Heart left ventricle (tissue), 16 donors: ENCODE measurements at regions of chr22 and their contacts with region 1.

Region 1: GRCh38 chr22:36781656-36782627 is 6.0 kb upstream of the IFT27 start:
- DNase-seq: peak; percentile 71 to 89 (median 73)
- ATAC-seq: peak; percentile 49 to 92 (median 89)
- H3K4me3 ChIP-seq: no peak overlapping the region
- H3K27ac ChIP-seq: peak overlapping the region in 1 of 12 donors; percentile 47
- H3K4me1 ChIP-seq: peaks cover 0 to 10% (median 2%) of the 10 kb centered on the region in 12 donors
- H3K27me3 ChIP-seq: peaks cover 0 to 32% (median 14%) of the 10 kb centered on the region in 9 donors
- CTCF ChIP-seq: peak; percentile 87 to 97 (median 91)
- POLR2A ChIP-seq: no peak

Region 2: GRCh38 chr22:36671404-36671803 is 110.5 kb before region 1 on chr22:
- intact Hi-C with region 1: no loop called
- DNase-seq: no peak
- ATAC-seq: no peak
- H3K4me3 ChIP-seq: no peak overlapping the region
- H3K27ac ChIP-seq: no peak overlapping the region
- H3K4me1 ChIP-seq: no peaks in the 10 kb centered on the region
- H3K27me3 ChIP-seq: peaks cover 0 to 29% (median 7%) of the 10 kb centered on the region in 9 donors
- CTCF ChIP-seq: no peak
- POLR2A ChIP-seq: no peak

Region 3: DNA sequence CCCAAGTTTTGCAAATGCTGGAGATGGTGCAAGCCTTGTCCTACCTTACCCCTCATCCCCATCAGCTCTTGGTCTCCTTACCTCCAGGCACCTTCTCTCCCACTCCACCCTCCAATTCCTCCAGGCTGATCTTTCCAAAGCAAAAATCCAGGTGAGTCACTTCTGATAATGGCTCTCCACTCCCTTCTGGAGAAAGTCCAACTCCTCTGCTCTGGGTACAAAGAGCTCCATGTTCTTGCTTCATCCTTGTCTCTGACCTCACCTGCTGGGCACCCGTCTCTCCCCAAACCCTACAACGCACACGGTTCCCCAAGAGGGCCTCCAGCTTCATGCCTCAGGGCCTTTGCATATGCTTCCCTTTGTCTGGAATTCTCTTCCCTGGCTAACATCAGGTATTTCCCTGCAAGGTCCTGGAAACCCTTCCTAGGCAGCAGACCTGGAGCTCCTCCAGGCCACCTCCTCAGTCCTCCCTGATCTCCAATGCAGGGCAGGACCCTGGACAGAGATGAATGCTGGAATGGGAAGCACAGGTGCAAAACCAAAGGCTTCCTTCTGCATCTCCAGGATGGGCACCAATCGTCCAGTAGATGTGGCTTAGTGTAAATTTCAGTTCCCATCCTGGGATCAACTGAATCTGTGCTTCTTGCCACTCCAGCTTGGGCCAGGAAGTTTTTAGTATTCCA is 28.7 kb before region 1 on chr22:
- intact Hi-C with region 1: no loop called
- DNase-seq: peak in 1 of 5 donors; percentile 2
- ATAC-seq: no peak
- H3K4me3 ChIP-seq: no peak overlapping the region
- H3K27ac ChIP-seq: no peak overlapping the region
- H3K4me1 ChIP-seq: no peaks in the 10 kb centered on the region
- H3K27me3 ChIP-seq: peaks cover 0 to 43% (median 4%) of the 10 kb centered on the region in 9 donors
- CTCF ChIP-seq: no peak
- POLR2A ChIP-seq: no peak

Region 4: GRCh38 chr22:36856121-36856791 is 74.3 kb after region 1 on chr22:
- intact Hi-C with region 1: loop called (anchors 1 to 5 kb)
- DNase-seq: peak; percentile 89 to 95 (median 91)
- ATAC-seq: peak; percentile 77 to 93 (median 90)
- H3K4me3 ChIP-seq: no peak overlapping the region
- H3K27ac ChIP-seq: no peak overlapping the region
- H3K4me1 ChIP-seq: peaks cover 0 to 42% (median 8%) of the 10 kb centered on the region in 12 donors
- H3K27me3 ChIP-seq: peaks cover 0 to 11% (median 0%) of the 10 kb centered on the region in 9 donors
- CTCF ChIP-seq: peak; percentile 99 to 100 (median 100)
- POLR2A ChIP-seq: no peak

Region 5: GRCh38 chr22:36977947-36978660 is 196.2 kb after region 1 on chr22:
- intact Hi-C with region 1: loop called (anchors 2 to 5 kb)
- DNase-seq: peak; percentile 90 to 94 (median 91)
- ATAC-seq: peak; percentile 95 to 98 (median 98)
- H3K4me3 ChIP-seq: peak overlapping the region in 11 of 12 donors; percentile 22 to 57 (median 48)
- H3K27ac ChIP-seq: peak overlapping the region in 3 of 12 donors; percentile 22 to 28 (median 25)
- H3K4me1 ChIP-seq: peaks cover 0 to 9% (median 3%) of the 10 kb centered on the region in 12 donors
- H3K27me3 ChIP-seq: peaks cover 0 to 12% (median 4%) of the 10 kb centered on the region in 9 donors
- CTCF ChIP-seq: peak; percentile 91 to 96 (median 95)
- POLR2A ChIP-seq: no peak

Region 6: GRCh38 chr22:37043828-37044538 is 262.0 kb after region 1 on chr22:
- intact Hi-C with region 1: loop called in 6 of 10 experiments (anchors 5 to 10 kb)
- DNase-seq: peak; percentile 54 to 78 (median 69)
- ATAC-seq: peak; percentile 72 to 96 (median 88)
- H3K4me3 ChIP-seq: no peak overlapping the region
- H3K27ac ChIP-seq: no peak overlapping the region
- H3K4me1 ChIP-seq: peaks cover 0 to 7% (median 0%) of the 10 kb centered on the region in 12 donors
- H3K27me3 ChIP-seq: peaks cover 0 to 6% (median 0%) of the 10 kb centered on the region in 9 donors
- CTCF ChIP-seq: peak; percentile 42 to 79 (median 58)
- POLR2A ChIP-seq: no peak

Region 7: DNA sequence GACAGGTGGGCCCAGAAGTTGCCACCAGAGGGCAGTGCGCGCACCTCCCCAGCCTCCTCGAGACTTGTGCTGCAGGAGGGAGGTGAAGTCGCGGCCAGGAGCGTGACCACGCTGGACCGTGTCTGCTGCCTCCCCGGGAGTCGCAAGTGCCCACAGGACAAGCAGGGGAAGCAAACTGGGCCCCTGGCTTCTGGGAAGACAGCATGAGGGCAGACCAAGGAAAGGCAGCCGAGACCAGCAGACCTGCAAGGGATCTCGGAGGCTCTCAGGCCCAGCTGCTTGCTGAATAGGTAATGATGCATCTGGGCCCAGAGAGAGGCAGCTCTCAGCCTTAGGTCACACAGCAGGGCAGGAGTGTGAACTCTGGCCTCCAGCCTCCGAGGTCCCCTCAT is 384.7 kb after region 1 on chr22:
- intact Hi-C with region 1: loop called in 1 of 10 experiments (anchors 10 kb)
- DNase-seq: peak; percentile 83 to 93 (median 89)
- ATAC-seq: peak; percentile 90 to 97 (median 93)
- H3K4me3 ChIP-seq: peak overlapping the region in 4 of 12 donors; percentile 13 to 43 (median 24)
- H3K27ac ChIP-seq: peak overlapping the region in 7 of 12 donors; percentile 2 to 71 (median 25)
- H3K4me1 ChIP-seq: peaks cover 0 to 31% (median 13%) of the 10 kb centered on the region in 12 donors
- H3K27me3 ChIP-seq: peaks cover 0 to 4% (median 0%) of the 10 kb centered on the region in 9 donors
- CTCF ChIP-seq: peak; percentile 86 to 98 (median 92)
- POLR2A ChIP-seq: no peak

Region 8: GRCh38 chr22:37199103-37199759 is 417.3 kb after region 1 on chr22:
- intact Hi-C with region 1: loop called in 3 of 10 experiments (anchors 2 to 10 kb)
- DNase-seq: peak; percentile 97 to 100 (median 98)
- ATAC-seq: peak; percentile 87 to 93 (median 90)
- H3K4me3 ChIP-seq: peak overlapping the region; percentile 35 to 87 (median 66)
- H3K27ac ChIP-seq: peak overlapping the region; percentile 83 to 99 (median 96)
- H3K4me1 ChIP-seq: peaks cover 19 to 47% (median 34%) of the 10 kb centered on the region in 12 donors
- H3K27me3 ChIP-seq: no peaks in the 10 kb centered on the region
- CTCF ChIP-seq: peak; percentile 90 to 99 (median 96)
- POLR2A ChIP-seq: peak; percentile 70 to 97

Region 9: GRCh38 chr22:37260901-37261336 is 479.0 kb after region 1 on chr22:
- intact Hi-C with region 1: loop called in 3 of 10 experiments (anchors 5 kb)
- DNase-seq: peak; percentile 32 to 78 (median 57)
- ATAC-seq: peak; percentile 37 to 78 (median 69)
- H3K4me3 ChIP-seq: no peak overlapping the region
- H3K27ac ChIP-seq: no peak overlapping the region
- H3K4me1 ChIP-seq: peaks cover 0 to 21% (median 2%) of the 10 kb centered on the region in 12 donors
- H3K27me3 ChIP-seq: peaks cover 4 to 76% (median 26%) of the 10 kb centered on the region in 9 donors
- CTCF ChIP-seq: peak; percentile 69 to 93 (median 86)
- POLR2A ChIP-seq: no peak